HepG2 (cell line): ENCODE measurements at regions of chr11 and their contacts with region 1.

Region 1: GRCh38 chr11:65013692-65014145 is 241 bp upstream of the ARL2 start:
- DNase-seq: no peak
- ATAC-seq: peak; percentile 88
- H3K4me3 ChIP-seq: peak overlapping the region; percentile 77 to 81 (median 80); a peak in 5 of 6 replicates
- H3K27ac ChIP-seq: peak overlapping the region; percentile 72
- H3K4me1 ChIP-seq: peaks cover 34% of the 10 kb centered on the region
- H3K27me3 ChIP-seq: no peaks in the 10 kb centered on the region
- CTCF ChIP-seq: peak; percentile 69
- EP300 ChIP-seq: 0 out of 4 replicates have a peak, but pooled peaks of 1 of the 2 experiments have one; percentile 17
- POLR2A ChIP-seq: no peak
- RAD21 ChIP-seq: peak; percentile 83

Region 2: GRCh38 chr11:65027213-65028067 is 13.7 kb after region 1 on chr11 and contains the start of gene SNX15:
- CTCF ChIA-PET with region 1: interaction called, 9 read pairs
- POLR2A ChIA-PET with region 1: interaction called, 26 read pairs
- in situ Hi-C with region 1: no loop called
- intact Hi-C with region 1: no loop called
- DNase-seq: peak; percentile 94
- ATAC-seq: peak; percentile 89
- H3K4me3 ChIP-seq: peak within 1 kb of the TSS; percentile 68 to 78 (median 75)
- H3K27ac ChIP-seq: peak within 1 kb of the TSS; percentile 85
- H3K4me1 ChIP-seq: peaks cover 48% of the 10 kb centered on the region
- H3K27me3 ChIP-seq: no peaks in the 10 kb centered on the region; a peak in 1 of 5 replicates
- CTCF ChIP-seq: peak; percentile 74
- EP300 ChIP-seq: no peak
- POLR2A ChIP-seq: peak; percentile 62 to 75
- RAD21 ChIP-seq: peak; percentile 49; the same call in 1 of the 2 replicates
- total RNA-seq, gene SNX15: 20.7 and 22.6 TPM in 2 replicates

Region 3: GRCh38 chr11:65069217-65069616 is 55.5 kb after region 1 on chr11:
- CTCF ChIA-PET with region 1: no interaction called
- POLR2A ChIA-PET with region 1: interaction called, 6 read pairs
- in situ Hi-C with region 1: no loop called
- intact Hi-C with region 1: loop called (anchors 1 kb)
- DNase-seq: peak; percentile 63
- ATAC-seq: no peak
- H3K4me3 ChIP-seq: no peak overlapping the region
- H3K27ac ChIP-seq: peak overlapping the region; percentile 29
- H3K4me1 ChIP-seq: peaks cover 36% of the 10 kb centered on the region
- H3K27me3 ChIP-seq: no peaks in the 10 kb centered on the region
- CTCF ChIP-seq: no peak
- EP300 ChIP-seq: no peak
- POLR2A ChIP-seq: no peak
- RAD21 ChIP-seq: no peak

Region 4: DNA sequence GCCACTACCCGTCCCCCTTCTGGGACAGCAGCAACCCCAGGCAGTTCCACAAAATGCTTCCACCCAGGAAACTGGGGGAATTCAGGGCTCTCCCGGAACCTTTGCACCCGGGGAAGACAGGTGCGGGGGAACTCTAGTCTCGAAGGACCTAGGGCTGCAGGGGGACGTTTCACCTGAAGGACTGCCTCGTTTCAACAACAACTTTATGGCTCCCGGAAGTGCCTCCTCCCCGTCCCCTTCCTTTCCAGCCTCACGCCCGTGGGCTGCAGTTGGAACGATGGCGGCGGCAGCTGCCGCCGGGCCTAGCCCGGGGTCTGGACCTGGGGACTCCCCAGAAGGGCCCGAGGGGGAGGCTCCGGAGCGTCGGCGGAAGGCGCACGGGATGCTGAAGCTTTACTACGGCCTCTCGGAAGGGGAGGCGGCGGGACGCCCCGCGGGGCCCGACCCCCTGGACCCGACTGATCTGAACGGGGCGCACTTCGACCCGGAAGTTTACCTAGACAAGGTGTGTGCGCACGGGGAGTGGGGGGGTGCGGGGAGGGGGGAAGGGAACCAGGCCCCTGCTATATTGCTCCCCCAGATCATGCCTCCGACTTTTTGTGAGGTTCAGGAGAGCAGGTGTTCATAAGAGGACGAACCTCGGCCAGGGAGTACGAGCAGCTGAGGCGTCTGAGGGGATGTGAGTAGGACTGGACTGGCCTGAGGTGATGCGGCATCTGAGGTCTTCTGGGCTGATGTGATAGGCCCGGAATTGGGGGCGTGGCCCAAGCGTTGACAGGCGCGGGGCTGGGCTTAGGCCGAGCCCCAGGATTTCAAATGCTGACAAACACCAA is 82.5 kb after region 1 on chr11 and contains the start of gene VPS51:
- CTCF ChIA-PET with region 1: no interaction called
- POLR2A ChIA-PET with region 1: interaction called, 13 read pairs
- in situ Hi-C with region 1: no loop called
- intact Hi-C with region 1: no loop called
- DNase-seq: peak; percentile 87
- ATAC-seq: peak; percentile 98
- H3K4me3 ChIP-seq: peak within 1 kb of the TSS; percentile 78 to 85 (median 83)
- H3K27ac ChIP-seq: peak within 1 kb of the TSS; percentile 93
- H3K4me1 ChIP-seq: peaks cover 50% of the 10 kb centered on the region
- H3K27me3 ChIP-seq: no peaks in the 10 kb centered on the region; a peak in 1 of 5 replicates
- CTCF ChIP-seq: peak; percentile 28; the same call in 1 of the 2 replicates
- EP300 ChIP-seq: peak; percentile 61 to 68; a peak in 2 of 4 replicates
- POLR2A ChIP-seq: peak; percentile 83 to 88
- RAD21 ChIP-seq: peak; percentile 48; the same call in 1 of the 2 replicates
- total RNA-seq, gene VPS51: 57.4 and 76.3 TPM in 2 replicates